Naive thymus-derived CD4-positive, alpha-beta T cell (primary cell): ENCODE measurements at regions of chr7 and their contacts with region 1.

Region 1: DNA sequence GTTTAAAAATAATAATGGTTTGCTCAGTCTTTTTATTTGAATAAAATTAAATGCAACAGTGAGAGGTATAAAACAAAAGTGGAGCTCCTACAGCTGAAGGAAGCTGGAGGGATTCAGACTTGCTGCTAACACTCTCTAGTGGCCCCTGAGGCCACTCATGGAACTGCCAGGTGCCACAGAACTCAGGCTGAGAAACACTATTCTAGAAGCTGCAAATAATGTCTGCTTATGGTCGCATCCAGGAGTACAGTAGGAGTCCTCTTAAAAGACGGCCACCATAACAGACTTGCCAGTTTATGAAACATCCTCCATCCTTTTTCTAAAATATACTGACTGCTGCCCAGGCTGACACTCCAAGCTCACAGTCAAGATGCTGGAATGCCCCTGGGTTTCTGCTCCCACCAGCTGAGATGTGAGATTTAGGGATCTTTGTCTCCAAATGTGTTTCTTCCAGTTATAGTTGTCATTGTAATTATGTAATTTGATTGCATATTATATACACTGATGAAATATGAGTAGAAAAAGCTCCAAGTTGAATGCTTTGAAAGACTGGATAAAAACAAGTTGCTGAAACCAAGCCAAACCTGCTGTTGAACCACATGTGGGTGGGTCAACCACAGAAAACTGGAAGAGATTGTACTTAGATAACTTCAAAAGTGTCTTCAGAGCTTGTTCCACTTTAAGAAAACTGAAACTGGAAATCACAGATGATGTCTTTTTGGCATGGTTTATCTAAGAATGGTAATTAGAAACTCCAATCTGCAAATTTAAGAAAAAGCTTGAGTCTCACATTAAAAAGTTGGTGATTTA is 213.7 kb upstream of the AOAH start:
- DNase-seq: peak in 8 of 9 donors; percentile 31 to 78 (median 62)
- ATAC-seq: peak; percentile 29
- H3K4me3 ChIP-seq: peak overlapping the region; percentile 10
- H3K4me3 Mint-ChIP-seq: peak overlapping the region in 8 of 10 donors; percentile 8 to 68 (median 50)
- H3K27ac ChIP-seq: no peak overlapping the region
- H3K27ac Mint-ChIP-seq: peak overlapping the region in 8 of 9 donors; percentile 57 to 95 (median 90)
- H3K4me1 ChIP-seq: peaks cover 0 to 5% of the 10 kb centered on the region in 2 donors
- H3K4me1 Mint-ChIP-seq: peaks cover 11 to 70% (median 63%) of the 10 kb centered on the region in 7 donors
- H3K27me3 ChIP-seq: no peaks in the 10 kb centered on the region
- H3K27me3 Mint-ChIP-seq: no peaks in the 10 kb centered on the region

Region 2: DNA sequence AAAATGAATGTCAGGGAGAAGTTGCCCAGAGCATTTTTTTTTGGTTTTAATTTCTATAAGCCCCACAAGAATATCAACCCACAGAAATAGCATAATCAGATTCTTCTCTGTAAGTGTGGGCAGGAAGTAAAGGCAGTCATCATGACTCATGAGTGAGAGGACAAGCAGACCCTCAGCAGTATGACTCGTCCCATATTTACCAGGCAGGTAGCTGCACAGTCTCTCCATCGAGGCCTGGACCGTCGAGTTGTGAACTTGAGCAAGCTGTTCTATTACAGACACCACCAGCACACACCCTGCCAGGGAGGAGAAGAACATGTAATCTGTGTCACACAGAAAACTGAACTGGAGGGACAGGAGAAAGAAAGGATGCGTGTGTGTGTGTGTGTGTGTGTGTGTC is 251.5 kb before region 1 on chr7:
- CTCF ChIA-PET with region 1: no interaction called
- POLR2A ChIA-PET with region 1: no interaction called
- intact Hi-C with region 1: loop called in 1 of 2 experiments (anchors 5 kb)
- DNase-seq: no peak
- ATAC-seq: peak; percentile 60
- H3K4me3 ChIP-seq: no peak overlapping the region
- H3K4me3 Mint-ChIP-seq: peak overlapping the region in 4 of 10 donors; percentile 26 to 78 (median 36)
- H3K27ac ChIP-seq: no peak overlapping the region
- H3K27ac Mint-ChIP-seq: peak overlapping the region in 6 of 9 donors; percentile 26 to 87 (median 67)
- H3K4me1 ChIP-seq: peaks cover 7 to 32% of the 10 kb centered on the region in 2 donors
- H3K4me1 Mint-ChIP-seq: peaks cover 13 to 68% (median 64%) of the 10 kb centered on the region in 7 donors
- H3K27me3 ChIP-seq: no peaks in the 10 kb centered on the region
- H3K27me3 Mint-ChIP-seq: no peaks in the 10 kb centered on the region